Activated CD8-positive, alpha-beta memory T cell treated with anti-CD3 and anti-CD28 coated beads, Interleukin-2, amount 10 ng/mL, durations not matched to agents 7 days and 5 days (primary cell): ENCODE measurements at regions of chr17 and their contacts with region 1.

Region 1: GRCh38 chr17:38557836-38558727 is 47.7 kb downstream of the SRCIN1 start:
- DNase-seq: peak; percentile 92
- ATAC-seq: peak; percentile 85
- H3K4me3 Mint-ChIP-seq: peak overlapping the region; percentile 78
- H3K27ac Mint-ChIP-seq: no peak overlapping the region
- H3K4me1 Mint-ChIP-seq: peaks cover 24% of the 10 kb centered on the region
- H3K27me3 Mint-ChIP-seq: peaks cover 63% of the 10 kb centered on the region

Region 2: DNA sequence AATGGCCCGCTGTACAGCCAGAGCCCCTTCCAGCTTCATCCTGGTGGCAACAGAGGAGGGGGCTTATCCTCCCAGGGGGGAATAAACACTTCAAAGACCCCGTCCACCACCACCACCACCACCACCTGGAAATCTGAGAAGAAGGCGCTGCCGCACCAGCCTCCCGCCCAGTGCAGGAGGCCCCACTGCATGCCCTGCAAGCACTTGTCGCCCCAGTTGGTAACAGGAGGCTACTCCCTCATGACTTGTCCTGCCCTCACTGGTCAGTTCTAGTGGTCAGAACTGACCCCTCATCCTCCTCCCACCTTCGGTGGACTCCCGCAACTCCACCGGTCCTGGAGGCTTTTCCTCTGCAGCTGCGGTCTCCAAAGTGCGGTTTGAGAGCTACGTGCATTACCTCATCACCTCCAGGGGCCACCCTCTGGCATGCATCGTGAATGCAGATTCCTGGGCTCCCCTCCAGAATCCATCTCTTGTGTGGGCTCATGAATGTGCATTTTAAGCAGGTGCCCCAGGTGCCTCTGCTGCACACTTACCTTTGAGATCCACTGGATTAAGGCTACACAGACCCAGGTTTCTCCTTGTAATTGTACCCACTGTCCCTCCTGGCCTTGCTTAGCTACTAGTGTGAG is 24.1 kb before region 1 on chr17:
- CTCF ChIA-PET with region 1: interaction called, 18 read pairs
- DNase-seq: no peak
- ATAC-seq: no peak
- H3K4me3 Mint-ChIP-seq: no peak overlapping the region
- H3K27ac Mint-ChIP-seq: no peak overlapping the region
- H3K4me1 Mint-ChIP-seq: no peaks in the 10 kb centered on the region
- H3K27me3 Mint-ChIP-seq: peaks cover 20% of the 10 kb centered on the region

Region 3: GRCh38 chr17:38584350-38584925 is 26.4 kb after region 1 on chr17:
- CTCF ChIA-PET with region 1: interaction called, 184 read pairs
- DNase-seq: peak; percentile 69
- ATAC-seq: peak; percentile 72
- H3K4me3 Mint-ChIP-seq: no peak overlapping the region
- H3K27ac Mint-ChIP-seq: no peak overlapping the region
- H3K4me1 Mint-ChIP-seq: peaks cover 14% of the 10 kb centered on the region
- H3K27me3 Mint-ChIP-seq: peaks cover 79% of the 10 kb centered on the region

Region 4: DNA sequence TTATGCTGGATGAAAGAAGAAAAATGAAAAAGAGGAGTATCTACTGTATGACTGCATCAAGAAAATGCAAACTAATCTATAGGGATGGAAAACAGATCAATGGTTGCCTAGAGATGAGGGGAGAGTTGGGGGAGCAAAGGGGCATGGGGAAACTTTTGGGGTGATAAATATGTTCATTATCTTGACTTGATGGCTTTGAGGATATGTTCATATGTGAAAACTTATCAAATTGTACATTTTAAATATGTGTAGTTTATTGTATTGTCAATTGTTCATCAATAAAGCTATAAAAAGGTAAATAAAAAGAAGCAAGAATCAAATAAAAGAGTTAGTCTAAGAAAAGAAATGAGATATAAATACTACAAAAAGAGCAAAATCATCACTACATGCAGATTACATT is 67.4 kb after region 1 on chr17:
- CTCF ChIA-PET with region 1: interaction called, 12 read pairs
- DNase-seq: no peak
- ATAC-seq: no peak
- H3K4me3 Mint-ChIP-seq: no peak overlapping the region
- H3K27ac Mint-ChIP-seq: no peak overlapping the region
- H3K4me1 Mint-ChIP-seq: peaks cover 11% of the 10 kb centered on the region
- H3K27me3 Mint-ChIP-seq: peaks cover 50% of the 10 kb centered on the region

Region 5: DNA sequence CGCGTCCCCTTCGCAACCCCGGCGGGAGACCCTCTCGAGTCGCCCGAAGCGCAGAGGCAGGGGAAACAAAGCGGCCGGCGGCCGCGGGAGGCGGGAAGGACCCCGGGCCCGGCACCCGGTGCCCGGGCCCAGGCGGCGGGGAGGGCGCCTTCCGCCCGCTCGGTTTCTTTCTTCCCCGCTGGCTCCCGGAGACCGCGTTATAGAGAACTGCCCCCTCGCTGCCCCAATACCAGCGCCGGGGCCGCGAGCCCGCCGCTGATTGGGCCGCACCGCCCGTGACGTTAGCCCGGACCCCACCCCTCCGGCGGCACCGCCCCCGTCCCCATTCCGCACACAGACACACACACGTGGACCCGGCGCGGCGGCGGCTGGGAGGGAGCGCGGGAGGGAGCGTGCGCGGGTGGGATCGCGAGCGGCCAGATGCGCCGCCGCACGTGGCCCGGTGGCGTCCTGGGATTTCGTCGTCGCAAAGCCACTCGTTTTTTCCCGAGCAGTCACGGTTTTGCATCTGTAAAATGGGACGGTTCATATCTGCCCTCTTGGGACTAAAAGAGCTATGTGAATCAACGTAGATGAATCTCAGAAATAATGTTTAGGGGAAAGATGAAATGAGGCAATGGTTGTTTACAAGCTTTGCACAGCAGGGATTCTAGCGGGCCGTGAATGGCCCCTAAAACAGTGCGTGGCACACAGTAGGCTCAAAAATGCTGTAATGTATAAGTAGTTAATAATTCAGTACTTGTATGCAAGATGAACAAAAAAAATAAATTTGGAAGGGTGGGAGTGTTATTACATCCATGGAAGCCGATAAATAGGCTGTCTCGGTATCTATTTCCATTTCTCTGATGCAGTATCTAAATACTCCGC is 116.9 kb after region 1 on chr17 and contains the start of gene EPOP:
- CTCF ChIA-PET with region 1: interaction called, 365 read pairs
- DNase-seq: peak; percentile 90
- ATAC-seq: peak; percentile 91
- H3K4me3 Mint-ChIP-seq: peak within 1 kb of the TSS; percentile 63
- H3K27ac Mint-ChIP-seq: peak within 1 kb of the TSS; percentile 14
- H3K4me1 Mint-ChIP-seq: peaks cover 32% of the 10 kb centered on the region
- H3K27me3 Mint-ChIP-seq: peaks cover 26% of the 10 kb centered on the region
- total RNA-seq, gene EPOP: 10.4 to 20.1 TPM